B cell (primary cell): ENCODE measurements at regions of chr1 and their contacts with region 1.

Region 1: GRCh38 chr1:167893798-167894197 is 20.1 kb downstream of the ADCY10 start:
- DNase-seq: no peak
- ATAC-seq: no peak
- H3K4me3 ChIP-seq: no peak overlapping the region
- H3K4me3 Mint-ChIP-seq: no peak overlapping the region
- H3K27ac ChIP-seq: no peak overlapping the region
- H3K27ac Mint-ChIP-seq: no peak overlapping the region
- H3K4me1 ChIP-seq: peaks cover 4 to 9% of the 10 kb centered on the region in 2 donors
- H3K4me1 Mint-ChIP-seq: peaks cover 8% of the 10 kb centered on the region
- H3K27me3 ChIP-seq: no peaks in the 10 kb centered on the region
- H3K27me3 Mint-ChIP-seq: no peaks in the 10 kb centered on the region
- CTCF ChIP-seq: no peak

Region 2: DNA sequence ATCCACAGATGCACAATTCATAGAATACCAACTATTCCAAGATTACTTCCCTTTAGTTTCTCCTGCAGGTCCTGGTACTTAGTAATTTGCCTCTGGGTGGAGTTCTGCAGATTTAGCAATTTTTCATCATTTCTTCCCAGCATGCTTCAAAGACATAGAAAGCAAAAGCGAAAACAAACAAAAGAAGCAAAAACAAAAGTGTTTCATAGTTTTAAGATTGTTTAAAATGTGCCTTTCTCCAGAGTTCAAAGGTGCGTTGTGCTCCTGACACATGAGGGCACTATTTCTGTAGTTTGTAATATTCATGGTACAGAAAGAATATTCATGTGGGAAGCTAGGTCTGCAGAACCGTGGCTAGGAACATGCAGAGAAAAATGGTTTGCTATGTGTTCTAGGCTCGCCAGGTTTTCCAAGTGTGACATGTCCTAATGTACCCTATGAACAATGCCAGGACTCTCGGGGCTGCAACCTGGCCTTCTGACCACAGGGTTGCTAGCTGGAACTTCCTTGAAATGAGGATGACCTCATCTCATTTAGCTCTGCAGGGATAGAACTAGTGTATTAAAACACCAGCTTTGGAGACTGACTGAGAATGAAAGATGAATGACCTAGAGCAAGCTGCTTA is 293.7 kb before region 1 on chr1:
- CTCF ChIA-PET with region 1: no interaction called
- POLR2A ChIA-PET with region 1: no interaction called
- intact Hi-C with region 1: no loop called
- DNase-seq: peak; percentile 77
- ATAC-seq: peak; percentile 66
- H3K4me3 ChIP-seq: no peak overlapping the region
- H3K4me3 Mint-ChIP-seq: peak overlapping the region; percentile 66
- H3K27ac ChIP-seq: no peak overlapping the region
- H3K27ac Mint-ChIP-seq: peak overlapping the region; percentile 8
- H3K4me1 ChIP-seq: peaks cover 38 to 39% of the 10 kb centered on the region in 2 donors
- H3K4me1 Mint-ChIP-seq: peaks cover 41% of the 10 kb centered on the region
- H3K27me3 ChIP-seq: no peaks in the 10 kb centered on the region
- H3K27me3 Mint-ChIP-seq: no peaks in the 10 kb centered on the region
- CTCF ChIP-seq: peak; percentile 67

Region 3: GRCh38 chr1:167881069-167881468 is 12.7 kb before region 1 on chr1:
- CTCF ChIA-PET with region 1: no interaction called
- POLR2A ChIA-PET with region 1: interaction called, 10 read pairs
- intact Hi-C with region 1: no loop called
- DNase-seq: no peak
- ATAC-seq: no peak
- H3K4me3 ChIP-seq: no peak overlapping the region
- H3K4me3 Mint-ChIP-seq: no peak overlapping the region
- H3K27ac ChIP-seq: no peak overlapping the region
- H3K27ac Mint-ChIP-seq: no peak overlapping the region
- H3K4me1 ChIP-seq: no peaks in the 10 kb centered on the region
- H3K4me1 Mint-ChIP-seq: no peaks in the 10 kb centered on the region
- H3K27me3 ChIP-seq: no peaks in the 10 kb centered on the region
- H3K27me3 Mint-ChIP-seq: peaks cover 5% of the 10 kb centered on the region
- CTCF ChIP-seq: no peak